ENCODE measurements at regions of chr14 and their contacts with region 1.

Region 1: DNA sequence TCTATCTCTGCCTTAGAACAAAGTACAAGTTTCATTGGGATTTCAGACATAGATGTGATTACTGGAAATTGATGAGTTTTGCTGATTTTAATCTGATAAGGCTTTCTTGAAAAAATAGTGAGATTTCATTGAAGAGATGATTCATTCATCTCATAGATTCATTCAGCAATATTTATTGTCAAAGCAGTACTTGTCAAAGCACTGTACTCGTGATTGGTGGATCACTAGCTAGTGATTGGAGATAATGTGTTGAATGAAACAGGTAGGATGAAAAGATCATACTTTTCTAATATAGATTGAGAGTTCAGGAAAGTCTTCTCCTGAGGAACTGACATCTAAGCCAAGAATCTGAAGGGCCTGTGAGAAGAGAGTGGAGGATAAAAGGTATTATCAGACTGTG is 71.0 kb downstream of the KTN1 start:
- DNase-seq: no peak
- ATAC-seq: no peak
- H3K4me3 Mint-ChIP-seq: no peak overlapping the region
- H3K27ac Mint-ChIP-seq: no peak overlapping the region
- H3K4me1 Mint-ChIP-seq: no peaks in the 10 kb centered on the region
- H3K27me3 Mint-ChIP-seq: no peaks in the 10 kb centered on the region
- CTCF ChIP-seq: no peak

Region 2: DNA sequence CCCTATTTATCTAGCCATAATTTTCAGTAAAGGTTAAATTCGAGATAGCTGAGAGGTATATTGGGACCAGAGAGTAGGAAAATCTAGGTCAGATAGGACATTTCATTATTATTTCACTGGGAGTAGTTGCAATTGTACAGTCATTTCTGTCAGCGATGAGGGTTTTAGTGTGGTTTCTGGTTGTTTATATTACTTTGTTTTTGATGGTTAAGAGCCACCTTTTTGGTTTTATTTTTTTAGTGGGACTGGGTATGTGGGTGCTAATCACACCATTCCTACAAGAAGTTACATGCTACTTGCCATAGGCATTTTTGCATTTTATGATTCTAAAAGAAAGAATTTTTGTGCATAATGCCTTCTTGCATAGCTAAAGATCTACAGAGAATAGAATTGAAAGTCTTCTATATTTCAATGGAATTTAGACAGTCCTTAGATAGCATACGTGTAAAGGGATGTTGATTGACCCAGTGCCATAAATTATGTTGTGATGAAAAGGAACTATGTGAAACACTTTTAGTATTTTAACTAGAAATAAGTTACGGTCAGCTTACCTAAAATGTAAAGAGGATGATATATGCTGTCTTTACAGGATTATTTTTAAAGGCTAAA is 14.2 kb after region 1 on chr14:
- CTCF ChIA-PET with region 1: no interaction called
- POLR2A ChIA-PET with region 1: no interaction called
- intact Hi-C with region 1: loop called (anchors 2 kb)
- DNase-seq: no peak
- ATAC-seq: no peak
- H3K4me3 Mint-ChIP-seq: no peak overlapping the region
- H3K27ac Mint-ChIP-seq: no peak overlapping the region
- H3K4me1 Mint-ChIP-seq: no peaks in the 10 kb centered on the region
- H3K27me3 Mint-ChIP-seq: no peaks in the 10 kb centered on the region
- CTCF ChIP-seq: no peak